Ascending aorta (tissue), 2 donors: ENCODE measurements at regions of chr4 and their contacts with region 1.

Region 1: DNA sequence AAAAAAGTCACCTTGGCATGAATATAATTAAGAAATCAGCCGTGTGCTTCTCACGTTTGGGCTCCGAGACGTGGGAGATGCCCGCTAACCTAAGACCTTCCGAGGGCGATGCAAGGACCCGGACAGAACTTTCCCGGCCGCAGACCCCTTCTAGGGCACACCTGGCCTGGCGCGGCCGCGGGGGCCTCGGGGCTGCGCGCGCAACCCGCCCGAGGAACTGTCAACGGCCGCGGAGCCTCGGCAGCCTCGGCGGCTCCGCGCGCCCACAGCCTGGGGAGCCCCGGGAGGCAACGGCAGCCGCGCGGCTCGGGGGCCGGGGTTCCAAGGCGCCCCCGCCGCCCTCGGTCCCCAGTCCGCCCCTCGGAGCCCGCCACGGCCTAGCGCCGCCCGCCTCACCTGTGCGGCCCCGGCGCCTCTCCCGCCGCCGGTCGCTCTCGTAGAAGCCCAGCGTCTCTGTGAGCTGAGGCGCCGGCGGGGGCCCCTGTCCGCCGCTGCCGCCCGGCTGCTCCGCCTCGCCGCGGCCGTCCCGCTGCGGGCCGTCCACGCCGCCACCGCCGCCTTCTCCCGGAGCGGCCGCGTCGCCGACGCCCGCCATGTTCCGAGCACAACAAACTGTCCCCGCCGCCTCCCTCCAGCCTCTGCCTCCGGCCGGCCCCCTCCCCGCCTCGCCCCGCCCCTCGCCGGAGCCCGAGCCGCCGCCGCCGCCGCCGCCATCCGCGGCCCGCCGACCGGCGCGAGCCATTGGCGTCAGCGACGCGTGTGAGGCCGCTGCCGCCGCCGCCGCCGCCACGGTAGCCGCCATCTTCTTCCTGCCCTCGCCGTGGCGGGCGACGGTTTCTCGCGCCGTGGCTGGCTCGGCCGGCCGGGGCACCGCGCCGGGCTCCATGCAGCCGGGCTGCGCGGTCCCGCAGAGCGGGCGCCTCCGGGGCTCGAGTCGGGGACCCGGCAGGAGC is at the start of gene TAPT1:
- DNase-seq: peak in 1 of 2 donors; percentile 85
- H3K4me3 ChIP-seq: peak within 1 kb of the TSS; percentile 93 to 96
- H3K27ac ChIP-seq: peak within 1 kb of the TSS; percentile 98
- H3K4me1 ChIP-seq: peaks cover 4 to 37% of the 10 kb centered on the region in 2 donors
- H3K27me3 ChIP-seq: no peaks in the 10 kb centered on the region
- CTCF ChIP-seq: no peak
- total RNA-seq, gene TAPT1: 10.7 TPM

Region 2: GRCh38 chr4:16123356-16124084 is 102.6 kb before region 1 on chr4:
- intact Hi-C with region 1: no loop called
- DNase-seq: no peak
- H3K4me3 ChIP-seq: no peak overlapping the region
- H3K27ac ChIP-seq: no peak overlapping the region
- H3K4me1 ChIP-seq: peaks cover 0 to 1% of the 10 kb centered on the region in 2 donors
- H3K27me3 ChIP-seq: no peaks in the 10 kb centered on the region
- CTCF ChIP-seq: no peak

Region 3: GRCh38 chr4:16264798-16265197 is 38.7 kb after region 1 on chr4:
- intact Hi-C with region 1: loop called (anchors 2 kb)
- DNase-seq: no peak
- H3K4me3 ChIP-seq: no peak overlapping the region
- H3K27ac ChIP-seq: no peak overlapping the region
- H3K4me1 ChIP-seq: peaks cover 3 to 10% of the 10 kb centered on the region in 2 donors
- H3K27me3 ChIP-seq: no peaks in the 10 kb centered on the region
- CTCF ChIP-seq: peak; percentile 38 to 72 (median 60)

Region 4: DNA sequence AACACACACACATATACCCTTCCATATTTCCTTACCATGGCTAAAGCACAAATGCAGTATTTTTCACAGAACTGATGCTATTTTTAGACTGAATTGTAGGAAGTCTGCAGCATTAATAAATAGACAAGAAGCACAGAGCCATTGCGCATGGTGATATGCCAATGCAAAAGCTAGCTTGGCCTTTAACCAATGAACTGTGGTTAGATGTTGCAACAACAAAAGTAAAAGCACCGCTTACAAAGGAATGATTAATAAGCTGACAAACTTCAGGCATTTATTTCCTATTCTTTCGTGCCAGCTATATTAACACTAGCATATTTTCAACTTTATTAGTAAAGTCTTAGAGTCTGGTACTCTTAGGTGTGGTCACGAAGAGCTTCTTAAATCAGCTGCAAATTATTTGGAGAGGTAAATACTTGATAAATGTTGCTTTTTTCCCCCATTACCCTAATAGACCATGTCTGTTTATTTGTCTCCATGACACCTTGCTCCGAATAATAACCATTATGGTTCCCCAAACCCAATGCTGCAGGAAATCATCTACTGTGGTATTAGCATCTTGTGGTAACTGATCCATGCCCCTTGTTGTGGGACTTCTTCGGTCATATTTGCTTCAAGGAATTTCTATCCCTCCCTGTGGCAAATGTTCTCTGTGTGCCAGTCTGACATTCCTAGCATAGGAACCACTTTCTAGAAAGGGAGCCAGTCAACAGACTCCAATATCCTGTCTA is 306.3 kb after region 1 on chr4:
- intact Hi-C with region 1: loop called (anchors 5 kb)
- DNase-seq: no peak
- H3K4me3 ChIP-seq: no peak overlapping the region
- H3K27ac ChIP-seq: peak overlapping the region; percentile 12 to 42
- H3K4me1 ChIP-seq: peaks cover 0 to 14% of the 10 kb centered on the region in 2 donors
- H3K27me3 ChIP-seq: no peaks in the 10 kb centered on the region
- CTCF ChIP-seq: no peak